GM10248 (cell line): ENCODE measurements at regions of chr16 and their contacts with region 1.

Region 1: DNA sequence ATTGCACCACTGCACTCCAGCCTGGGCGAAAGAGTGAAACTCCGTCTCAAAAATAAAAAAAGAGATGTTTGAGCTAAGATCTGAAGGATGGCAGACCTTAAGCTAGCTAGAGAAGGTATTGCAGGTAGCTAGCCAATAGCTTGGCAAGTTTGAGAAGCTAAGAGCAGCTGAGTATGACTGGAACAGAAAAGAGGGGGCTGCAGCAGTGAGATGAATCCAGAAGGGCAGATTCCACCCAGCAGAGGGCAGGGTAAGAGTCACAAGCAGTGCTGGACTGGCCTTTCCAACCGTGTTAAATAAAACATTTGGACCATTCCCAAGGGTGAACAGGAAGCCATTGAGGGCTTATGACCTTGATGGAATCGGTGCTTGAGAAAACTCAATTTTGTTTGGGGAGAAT is 5.7 kb upstream of the PHAF1 start:
- DNase-seq: no peak
- CTCF ChIP-seq: no peak

Region 2: GRCh38 chr16:66954097-66954659 is 149.9 kb before region 1 on chr16:
- CTCF ChIA-PET with region 1: interaction called, 22 read pairs
- POLR2A ChIA-PET with region 1: no interaction called
- DNase-seq: peak; percentile 79
- CTCF ChIP-seq: peak; percentile 84

Region 3: DNA sequence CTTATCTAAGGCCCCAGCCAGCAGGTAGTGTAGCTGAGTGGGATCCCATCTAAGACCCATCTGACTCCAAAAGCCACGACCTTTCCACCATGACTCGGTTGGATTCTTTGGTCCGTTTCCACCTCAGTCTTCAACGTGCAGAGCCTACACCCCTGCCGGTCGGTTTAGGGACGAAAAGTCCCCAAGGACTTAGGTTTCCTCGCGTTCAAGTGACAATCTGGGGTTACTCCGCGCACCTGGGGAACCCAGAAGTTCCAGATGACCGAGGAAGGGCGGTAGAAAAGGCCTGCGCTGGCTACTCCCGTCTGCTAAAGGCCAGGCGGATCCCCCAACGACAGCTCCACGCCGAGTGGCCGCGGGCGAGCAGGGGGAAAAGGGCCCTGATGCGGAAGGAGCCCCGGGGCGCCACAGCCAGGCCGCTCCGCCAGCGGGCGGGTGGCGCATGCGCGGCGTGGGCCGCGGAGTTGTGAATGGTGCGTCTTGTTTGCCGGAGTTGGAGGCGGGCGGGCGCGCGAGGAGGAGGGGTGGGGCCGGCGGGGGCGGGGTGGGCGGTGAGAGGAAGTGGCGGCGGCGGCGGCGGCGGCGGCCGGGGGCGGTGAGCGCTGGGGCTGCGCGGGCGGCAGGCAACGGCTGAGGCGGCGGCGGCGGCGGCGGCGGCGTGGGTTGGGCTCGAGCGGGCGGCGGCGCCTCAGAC is 75.4 kb before region 1 on chr16 and contains the start of gene CBFB:
- CTCF ChIA-PET with region 1: interaction called, 12 read pairs
- POLR2A ChIA-PET with region 1: no interaction called
- DNase-seq: peak; percentile 98
- CTCF ChIP-seq: no peak

Region 4: DNA sequence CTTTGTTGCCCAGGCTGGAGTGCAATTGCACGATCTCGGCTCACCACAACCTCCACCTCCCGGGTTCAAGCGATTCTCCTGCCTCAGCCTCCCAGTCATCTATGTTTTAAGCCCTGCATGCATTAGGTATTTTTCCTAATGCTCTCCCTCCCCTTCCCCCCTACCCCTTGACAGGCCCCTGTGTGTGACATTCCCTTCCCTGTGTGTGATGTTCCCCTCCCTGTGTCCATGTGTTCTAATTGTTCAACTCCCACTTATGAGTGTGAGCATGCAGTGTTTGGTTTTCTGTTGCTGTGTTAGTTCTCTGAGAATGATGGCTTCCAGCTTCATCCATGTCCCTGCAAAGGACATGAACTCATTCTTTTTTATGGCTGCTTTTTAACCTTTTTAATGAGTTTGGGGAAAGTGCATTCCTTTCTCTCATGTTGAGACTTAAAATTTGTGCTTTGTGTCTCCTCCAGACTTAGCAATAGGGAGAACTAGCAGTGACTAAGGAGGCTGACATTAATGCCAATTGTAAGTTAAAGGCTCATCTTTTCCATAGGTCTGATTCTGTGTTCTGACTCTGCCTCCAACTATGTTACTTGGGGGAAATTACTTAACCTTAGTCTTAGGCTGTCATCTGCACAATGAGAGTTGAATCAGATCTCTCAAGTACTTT is 12.0 kb before region 1 on chr16:
- CTCF ChIA-PET with region 1: interaction called, 15 read pairs
- POLR2A ChIA-PET with region 1: no interaction called
- DNase-seq: no peak
- CTCF ChIP-seq: no peak